ENCODE measurements at regions of chr2 and their contacts with region 1.

Region 1: GRCh38 chr2:230798769-230799399 is 65.9 kb upstream of the ITM2C start:
- DNase-seq: peak; percentile 88
- H3K4me3 Mint-ChIP-seq: peak overlapping the region; percentile 31
- H3K27ac Mint-ChIP-seq: peak overlapping the region; percentile 71
- H3K4me1 Mint-ChIP-seq: peaks cover 22% of the 10 kb centered on the region
- H3K27me3 Mint-ChIP-seq: no peaks in the 10 kb centered on the region

Region 2: DNA sequence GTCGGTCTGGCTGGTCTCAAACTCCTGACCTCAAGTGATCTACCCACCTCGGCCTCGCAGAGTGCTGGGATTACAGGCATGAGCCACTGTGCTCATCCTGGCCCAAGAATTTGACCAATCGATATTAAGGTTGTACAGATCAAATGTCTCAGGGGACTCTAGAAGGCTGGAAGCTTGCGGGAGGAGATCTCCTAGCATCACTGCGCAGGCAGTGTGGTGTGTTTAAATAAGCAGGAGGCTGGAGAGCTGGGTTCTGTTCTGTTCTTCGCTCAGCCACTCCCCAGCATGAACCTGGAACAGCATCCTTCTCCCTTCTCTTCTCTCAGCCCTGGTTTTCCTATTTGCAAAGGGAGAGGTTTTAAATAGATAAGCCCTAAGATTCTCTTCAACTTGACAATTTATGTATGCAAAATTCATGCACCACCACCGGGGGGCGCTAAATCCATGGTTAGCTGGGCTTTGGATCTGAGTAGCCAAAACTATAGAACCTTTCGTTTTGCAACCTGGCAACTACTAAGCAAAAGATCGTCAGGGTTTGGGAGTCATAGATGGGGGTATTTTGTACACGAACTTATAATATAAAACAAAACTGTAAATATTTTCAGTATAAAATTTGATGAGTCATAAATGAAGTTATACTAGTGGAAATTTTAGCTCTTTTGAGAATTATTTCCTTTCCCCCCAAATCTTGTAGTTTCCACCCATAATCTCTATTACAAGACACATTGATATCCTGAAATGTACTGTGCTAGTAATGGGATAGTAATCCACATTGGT is 790.8 kb before region 1 on chr2:
- intact Hi-C with region 1: loop called (anchors 10 kb)
- DNase-seq: peak; percentile 94
- H3K4me3 Mint-ChIP-seq: no peak overlapping the region
- H3K27ac Mint-ChIP-seq: no peak overlapping the region
- H3K4me1 Mint-ChIP-seq: peaks cover 2% of the 10 kb centered on the region
- H3K27me3 Mint-ChIP-seq: no peaks in the 10 kb centered on the region

Region 3: DNA sequence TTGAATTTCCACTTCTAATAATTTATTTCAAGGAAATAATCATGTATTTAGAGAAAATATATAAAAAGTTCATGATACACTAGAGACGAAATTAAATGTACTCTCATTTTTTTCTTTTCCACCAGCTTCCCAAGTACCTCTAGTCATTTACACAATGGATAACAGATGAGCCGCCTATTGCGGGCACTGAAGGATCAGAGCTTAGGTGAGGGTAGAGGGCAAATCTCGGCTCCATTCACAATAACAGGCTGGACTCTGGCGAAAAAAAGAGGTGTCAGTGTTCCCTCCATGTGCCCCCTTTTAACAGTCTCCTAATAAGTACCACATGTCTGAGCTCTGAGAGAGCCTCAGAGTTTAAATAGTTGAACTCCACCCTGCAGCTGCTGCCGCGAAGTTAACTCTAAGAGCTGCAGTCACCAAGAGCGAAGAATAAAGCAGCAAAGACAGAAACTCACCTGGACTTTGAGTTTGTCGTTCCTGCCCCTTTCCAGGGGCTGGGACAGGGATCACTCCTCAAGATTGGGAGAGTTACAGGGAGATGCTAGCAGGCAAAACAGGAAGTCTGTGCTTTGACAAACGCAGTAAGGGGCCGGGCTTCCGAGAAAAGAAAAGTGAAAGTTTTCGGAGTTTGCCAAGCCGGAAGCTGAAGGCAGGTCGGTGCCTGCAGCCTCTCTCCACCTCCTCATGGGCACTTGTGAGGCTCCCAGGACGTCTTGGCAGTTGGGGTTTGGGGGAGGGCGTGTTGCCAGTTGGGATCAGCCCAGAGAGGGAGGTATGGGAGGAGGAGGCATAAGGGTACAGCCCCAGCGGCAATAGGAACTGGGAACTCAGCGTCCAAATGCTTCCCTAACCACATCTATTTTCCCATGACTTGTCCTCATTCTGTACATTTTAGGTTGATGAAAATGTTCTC is 579.2 kb before region 1 on chr2 and contains the start of gene SP110:
- intact Hi-C with region 1: loop called (anchors 5 kb)
- DNase-seq: peak; percentile 96
- H3K4me3 Mint-ChIP-seq: peak within 1 kb of the TSS; percentile 98
- H3K27ac Mint-ChIP-seq: peak within 1 kb of the TSS; percentile 98
- H3K4me1 Mint-ChIP-seq: peaks cover 66% of the 10 kb centered on the region
- H3K27me3 Mint-ChIP-seq: no peaks in the 10 kb centered on the region
- total RNA-seq, gene SP110: 137 and 148 TPM in 2 replicates

Region 4: DNA sequence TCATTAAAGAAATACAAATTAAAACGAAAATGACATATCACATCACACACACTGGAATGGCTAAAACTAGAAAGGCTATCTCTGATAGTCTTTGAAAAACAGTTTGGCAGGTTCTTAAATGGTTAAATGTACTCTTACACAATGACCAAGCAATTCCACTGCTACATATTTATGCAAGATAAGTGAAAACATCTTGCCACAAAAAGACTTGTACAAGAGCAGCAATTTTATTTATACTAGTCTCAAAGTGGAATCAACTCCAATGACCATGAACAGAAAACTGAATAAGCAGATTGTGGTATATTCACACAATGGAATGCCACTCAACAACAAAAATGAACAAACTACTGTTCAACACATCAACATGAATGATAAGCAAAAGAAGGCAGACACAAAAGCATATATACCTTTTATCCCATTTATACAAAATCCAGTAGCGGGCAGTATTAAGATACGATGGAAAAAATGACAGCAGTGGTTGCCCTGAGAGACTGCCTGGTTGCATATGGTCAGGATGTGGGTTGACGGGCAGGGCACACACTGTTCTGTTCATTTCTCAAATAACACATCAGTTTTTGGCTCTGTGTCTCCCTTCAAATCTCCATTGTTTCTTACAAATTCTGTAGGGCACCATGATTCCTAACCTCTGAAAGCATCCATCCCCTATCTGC is 357.5 kb before region 1 on chr2:
- intact Hi-C with region 1: loop called (anchors 10 kb)
- DNase-seq: peak; percentile 82
- H3K4me3 Mint-ChIP-seq: peak overlapping the region; percentile 50
- H3K27ac Mint-ChIP-seq: peak overlapping the region; percentile 90
- H3K4me1 Mint-ChIP-seq: peaks cover 42% of the 10 kb centered on the region
- H3K27me3 Mint-ChIP-seq: no peaks in the 10 kb centered on the region

Region 5: DNA sequence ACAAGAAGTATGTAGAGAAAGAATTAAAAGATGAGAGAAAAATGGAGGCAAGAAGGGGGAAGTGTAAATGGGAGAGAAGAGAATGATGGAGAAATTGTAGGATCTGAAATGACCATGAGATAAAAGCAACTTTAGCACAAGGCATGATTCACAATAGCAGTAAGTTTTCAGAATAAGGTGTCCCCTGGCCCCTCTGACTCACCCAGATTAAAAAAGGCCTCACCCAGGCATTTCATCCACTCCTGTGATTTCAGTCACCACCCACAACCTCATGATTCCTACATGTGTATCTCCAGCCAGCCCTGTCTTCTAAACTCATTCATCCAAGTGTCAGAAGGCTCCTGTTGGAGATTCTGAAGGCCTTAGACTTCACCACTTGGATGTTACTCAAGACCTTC is 326.3 kb before region 1 on chr2:
- intact Hi-C with region 1: loop called (anchors 5 kb)
- DNase-seq: peak; percentile 72
- H3K4me3 Mint-ChIP-seq: peak overlapping the region; percentile 5
- H3K27ac Mint-ChIP-seq: peak overlapping the region; percentile 85
- H3K4me1 Mint-ChIP-seq: peaks cover 34% of the 10 kb centered on the region
- H3K27me3 Mint-ChIP-seq: no peaks in the 10 kb centered on the region